ENCODE measurements at regions of chr10 and their contacts with region 1.

Region 1: GRCh38 chr10:11424456-11425297 is 186.8 kb downstream of the USP6NL start:
- DNase-seq: peak; percentile 71
- ATAC-seq: peak; percentile 93
- H3K4me3 Mint-ChIP-seq: no peak overlapping the region
- H3K27ac Mint-ChIP-seq: no peak overlapping the region
- H3K4me1 Mint-ChIP-seq: peaks cover 6% of the 10 kb centered on the region; the same call in 1 of the 2 replicates
- H3K27me3 Mint-ChIP-seq: no peaks in the 10 kb centered on the region
- CTCF ChIP-seq: peak; percentile 84

Region 2: GRCh38 chr10:11437391-11438142 is 12.9 kb after region 1 on chr10:
- CTCF ChIA-PET with region 1: interaction called, 26 read pairs
- POLR2A ChIA-PET with region 1: interaction called, 3 read pairs
- DNase-seq: peak; percentile 62
- ATAC-seq: peak; percentile 78
- H3K4me3 Mint-ChIP-seq: no peak overlapping the region
- H3K27ac Mint-ChIP-seq: no peak overlapping the region
- H3K4me1 Mint-ChIP-seq: peaks cover 62% of the 10 kb centered on the region
- H3K27me3 Mint-ChIP-seq: peaks cover 2% of the 10 kb centered on the region; the same call in 1 of the 2 replicates
- CTCF ChIP-seq: no peak

Region 3: GRCh38 chr10:11448545-11449244 is 24.0 kb after region 1 on chr10:
- CTCF ChIA-PET with region 1: interaction called, 10 read pairs
- POLR2A ChIA-PET with region 1: no interaction called
- DNase-seq: no peak
- ATAC-seq: no peak
- H3K4me3 Mint-ChIP-seq: no peak overlapping the region
- H3K27ac Mint-ChIP-seq: no peak overlapping the region
- H3K4me1 Mint-ChIP-seq: peaks cover 31% of the 10 kb centered on the region
- H3K27me3 Mint-ChIP-seq: peaks cover 3% of the 10 kb centered on the region; the same call in 1 of the 2 replicates
- CTCF ChIP-seq: no peak